Activated CD4-positive, alpha-beta T cell treated with anti-CD3 and anti-CD28 coated beads for 36 hours (primary cell): ENCODE measurements at regions of chr1 and their contacts with region 1.

Region 1: GRCh38 chr1:241627453-241628259 is 12.5 kb downstream of the CHML start:
- DNase-seq: peak; percentile 58
- ATAC-seq: peak; percentile 89
- H3K4me3 Mint-ChIP-seq: peak overlapping the region; percentile 1
- H3K27ac Mint-ChIP-seq: peak overlapping the region; percentile 44
- H3K4me1 Mint-ChIP-seq: peaks cover 22% of the 10 kb centered on the region
- H3K27me3 Mint-ChIP-seq: no peaks in the 10 kb centered on the region

Region 2: GRCh38 chr1:241617426-241617825 is 10.2 kb before region 1 on chr1:
- CTCF ChIA-PET with region 1: interaction called, 29 read pairs
- POLR2A ChIA-PET with region 1: no interaction called
- intact Hi-C with region 1: no loop called
- DNase-seq: no peak
- ATAC-seq: peak; percentile 37
- H3K4me3 Mint-ChIP-seq: no peak overlapping the region
- H3K27ac Mint-ChIP-seq: no peak overlapping the region
- H3K4me1 Mint-ChIP-seq: peaks cover 14% of the 10 kb centered on the region
- H3K27me3 Mint-ChIP-seq: no peaks in the 10 kb centered on the region